Sigmoid colon (tissue), 7 donors: ENCODE measurements at regions of chr19 and their contacts with region 1.

Region 1: GRCh38 chr19:19063183-19064097 is at the start of gene SLC25A42:
- DNase-seq: peak; percentile 100
- H3K4me3 ChIP-seq: peak within 1 kb of the TSS; percentile 64 to 93 (median 92)
- H3K27ac ChIP-seq: peak within 1 kb of the TSS; percentile 79 to 90 (median 88)
- H3K4me1 ChIP-seq: peaks cover 0 to 28% (median 21%) of the 10 kb centered on the region in 4 donors
- H3K27me3 ChIP-seq: no peaks in the 10 kb centered on the region
- CTCF ChIP-seq: no peak
- EP300 ChIP-seq: no peak
- POLR2A ChIP-seq: peak in 1 of 2 donors; percentile 20
- total RNA-seq, gene SLC25A42: 6.3 to 8.2 (median 7.3) TPM

Region 2: GRCh38 chr19:19033426-19034203 is 29.8 kb before region 1 on chr19 and contains the starts of genes ARMC6 and SUGP2:
- intact Hi-C with region 1: loop called (anchors 2 kb)
- DNase-seq: peak; percentile 90
- H3K4me3 ChIP-seq: peak within 1 kb of the TSS; percentile 74 to 92 (median 88)
- H3K27ac ChIP-seq: peak within 1 kb of the TSS; percentile 93 to 97 (median 95)
- H3K4me1 ChIP-seq: peaks cover 0 to 32% (median 26%) of the 10 kb centered on the region in 4 donors
- H3K27me3 ChIP-seq: no peaks in the 10 kb centered on the region
- CTCF ChIP-seq: peak in 3 of 4 experiments; percentile 7 to 20 (median 8)
- EP300 ChIP-seq: no peak
- POLR2A ChIP-seq: no peak
- total RNA-seq, gene ARMC6: 11.4 to 21.7 (median 13.5) TPM
- total RNA-seq, gene SUGP2: 25.0 to 82.3 (median 33.2) TPM

Region 3: GRCh38 chr19:19087676-19088075 is 24.2 kb after region 1 on chr19:
- intact Hi-C with region 1: no loop called
- DNase-seq: no peak
- H3K4me3 ChIP-seq: no peak overlapping the region
- H3K27ac ChIP-seq: no peak overlapping the region
- H3K4me1 ChIP-seq: no peaks in the 10 kb centered on the region
- H3K27me3 ChIP-seq: no peaks in the 10 kb centered on the region
- CTCF ChIP-seq: no peak
- EP300 ChIP-seq: no peak
- POLR2A ChIP-seq: no peak